CD14-positive monocyte (primary cell): ENCODE measurements at regions of chr2 and their contacts with region 1.

Region 1: DNA sequence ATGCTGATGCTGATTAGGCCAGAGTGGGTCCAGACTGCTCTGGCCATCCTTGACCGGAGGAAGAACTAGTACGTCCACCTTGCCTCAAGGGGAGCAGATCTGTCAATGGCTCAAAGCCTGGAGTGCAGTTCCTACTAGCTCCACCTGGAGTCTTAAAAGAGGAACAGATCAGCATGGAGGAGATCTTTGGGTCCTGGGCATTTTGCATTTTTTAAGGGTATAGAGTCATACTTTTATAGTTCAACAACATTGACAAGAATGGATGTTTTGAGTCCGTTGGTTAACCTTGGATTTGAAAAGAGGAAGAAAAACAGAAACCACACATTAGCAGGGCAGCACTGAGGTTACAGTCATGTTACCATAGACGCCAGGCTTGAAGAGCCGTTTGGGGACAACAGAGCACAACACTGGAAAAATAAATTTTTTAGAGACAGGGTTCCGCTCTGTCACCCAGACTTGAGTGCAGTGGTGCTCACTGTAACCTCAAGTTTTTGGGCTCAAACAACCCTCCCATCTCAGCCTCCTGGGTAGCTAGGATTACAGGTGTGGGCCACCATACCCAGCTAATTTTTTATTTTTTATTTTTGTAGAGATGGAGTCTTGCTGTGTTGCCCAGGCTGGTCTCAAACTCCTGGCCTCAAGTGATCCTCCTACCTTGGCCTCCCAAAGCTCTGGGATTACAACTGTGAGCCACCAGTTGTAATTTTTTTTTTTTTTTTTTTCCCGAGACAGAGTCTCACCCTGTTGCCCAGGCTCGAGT is 78.5 kb downstream of the PRKCE start:
- DNase-seq: peak; percentile 68 to 80 (median 70)
- H3K4me3 ChIP-seq: peak overlapping the region in 1 of 3 experiments; percentile 35
- H3K4me3 Mint-ChIP-seq: peak overlapping the region; percentile 34 to 40
- H3K27ac ChIP-seq: peak overlapping the region; percentile 57 to 69
- H3K27ac Mint-ChIP-seq: peak overlapping the region; percentile 8 to 90 (median 76)
- H3K4me1 ChIP-seq: peaks cover 52 to 54% of the 10 kb centered on the region in 2 donors
- H3K4me1 Mint-ChIP-seq: peaks cover 58% of the 10 kb centered on the region
- H3K27me3 ChIP-seq: no peaks in the 10 kb centered on the region
- H3K27me3 Mint-ChIP-seq: peaks cover 0 to 4% (median 0%) of the 10 kb centered on the region in 3 donors
- CTCF ChIP-seq: peak; percentile 59

Region 2: DNA sequence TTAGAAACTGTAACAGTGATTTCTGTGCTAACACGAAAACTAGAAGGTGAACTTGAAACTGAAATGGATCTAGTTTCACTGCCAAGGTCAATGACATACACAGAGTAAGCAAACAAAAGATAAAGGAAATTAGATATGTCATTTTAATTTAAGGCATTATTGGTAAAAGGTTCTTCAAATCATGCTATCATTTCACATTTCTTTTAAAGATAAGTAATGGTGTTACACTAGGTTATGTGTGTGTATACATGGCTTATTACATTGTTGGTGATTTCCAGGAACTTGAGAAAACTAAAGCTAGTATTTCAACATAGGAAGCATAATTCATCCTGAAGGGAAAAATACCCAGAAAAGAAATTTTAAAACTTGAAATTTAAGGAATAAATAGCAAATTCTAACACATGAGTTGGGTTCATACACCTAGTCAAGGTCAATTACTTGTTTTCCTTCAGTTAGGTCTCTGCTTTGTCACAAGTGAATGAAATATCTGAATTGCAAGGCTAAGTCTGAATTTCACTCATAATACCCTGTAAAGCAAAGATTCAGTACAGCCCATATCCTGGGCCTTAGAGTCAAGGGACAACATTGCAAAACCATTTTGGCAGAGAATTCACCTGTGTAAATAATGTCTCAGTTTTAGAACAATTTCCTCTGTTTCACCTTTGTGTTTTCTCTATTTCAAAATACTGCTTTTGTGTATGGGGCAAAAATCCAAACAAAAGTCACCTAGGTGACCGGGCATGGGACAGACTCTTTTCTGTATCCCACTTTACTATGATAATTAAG is 260.4 kb before region 1 on chr2:
- intact Hi-C with region 1: no loop called
- DNase-seq: no peak
- H3K4me3 ChIP-seq: no peak overlapping the region
- H3K4me3 Mint-ChIP-seq: no peak overlapping the region
- H3K27ac ChIP-seq: no peak overlapping the region
- H3K27ac Mint-ChIP-seq: no peak overlapping the region
- H3K4me1 ChIP-seq: peaks cover 0 to 9% of the 10 kb centered on the region in 2 donors
- H3K4me1 Mint-ChIP-seq: peaks cover 23% of the 10 kb centered on the region
- H3K27me3 ChIP-seq: no peaks in the 10 kb centered on the region
- H3K27me3 Mint-ChIP-seq: peaks cover 0 to 2% (median 0%) of the 10 kb centered on the region in 3 donors
- CTCF ChIP-seq: no peak

Region 3: DNA sequence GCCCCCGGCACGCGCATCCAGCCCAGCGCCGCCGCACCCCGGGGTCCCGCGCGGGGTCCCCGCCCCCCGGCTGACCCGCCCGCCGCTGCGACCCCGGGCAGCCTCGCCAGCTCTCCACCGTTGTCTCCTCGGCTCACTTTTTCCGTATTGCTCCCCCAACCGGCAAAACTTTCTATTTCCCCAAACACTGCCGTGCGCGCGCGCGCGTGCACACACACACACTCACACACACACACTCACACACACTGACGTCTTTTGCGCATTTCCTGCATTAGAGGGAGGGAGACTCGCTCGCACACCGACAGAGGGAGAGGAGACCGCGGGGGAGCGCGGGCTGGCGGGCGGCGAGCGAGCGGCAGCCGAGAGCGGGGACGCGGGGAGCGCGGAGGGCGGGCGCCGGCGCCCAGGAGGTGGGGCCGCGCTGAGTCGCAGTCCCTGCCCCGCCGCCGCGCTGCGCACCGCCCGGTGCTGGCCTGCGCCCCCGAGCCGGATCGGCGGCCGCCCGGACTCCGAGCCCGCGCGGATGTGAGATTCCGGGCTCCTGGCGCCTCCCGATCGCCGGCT is 79.0 kb before region 1 on chr2:
- intact Hi-C with region 1: loop called in 1 of 2 experiments (anchors 5 kb)
- DNase-seq: peak; percentile 92 to 96 (median 95)
- H3K4me3 ChIP-seq: peak overlapping the region; percentile 83 to 91 (median 85)
- H3K4me3 Mint-ChIP-seq: peak overlapping the region; percentile 95 to 98
- H3K27ac ChIP-seq: peak overlapping the region; percentile 86 to 87
- H3K27ac Mint-ChIP-seq: peak overlapping the region; percentile 87 to 96 (median 91)
- H3K4me1 ChIP-seq: peaks cover 28 to 30% of the 10 kb centered on the region in 2 donors
- H3K4me1 Mint-ChIP-seq: peaks cover 41% of the 10 kb centered on the region
- H3K27me3 ChIP-seq: no peaks in the 10 kb centered on the region
- H3K27me3 Mint-ChIP-seq: peaks cover 2 to 12% (median 3%) of the 10 kb centered on the region in 3 donors
- CTCF ChIP-seq: peak; percentile 19

Region 4: GRCh38 chr2:45771261-45771660 is 41.3 kb after region 1 on chr2:
- intact Hi-C with region 1: loop called (anchors 2 to 5 kb)
- DNase-seq: peak; percentile 57 to 86 (median 74)
- H3K4me3 ChIP-seq: peak overlapping the region in 2 of 3 experiments; percentile 22 to 56
- H3K4me3 Mint-ChIP-seq: peak overlapping the region; percentile 78 to 90
- H3K27ac ChIP-seq: peak overlapping the region; percentile 57 to 72
- H3K27ac Mint-ChIP-seq: peak overlapping the region; percentile 52 to 93 (median 87)
- H3K4me1 ChIP-seq: peaks cover 58 to 63% of the 10 kb centered on the region in 2 donors
- H3K4me1 Mint-ChIP-seq: peaks cover 76% of the 10 kb centered on the region
- H3K27me3 ChIP-seq: no peaks in the 10 kb centered on the region
- H3K27me3 Mint-ChIP-seq: peaks cover 1 to 2% (median 2%) of the 10 kb centered on the region in 3 donors
- CTCF ChIP-seq: no peak